SK-N-SH (cell line): ENCODE measurements at regions of chr17 and their contacts with region 1.

Region 1: DNA sequence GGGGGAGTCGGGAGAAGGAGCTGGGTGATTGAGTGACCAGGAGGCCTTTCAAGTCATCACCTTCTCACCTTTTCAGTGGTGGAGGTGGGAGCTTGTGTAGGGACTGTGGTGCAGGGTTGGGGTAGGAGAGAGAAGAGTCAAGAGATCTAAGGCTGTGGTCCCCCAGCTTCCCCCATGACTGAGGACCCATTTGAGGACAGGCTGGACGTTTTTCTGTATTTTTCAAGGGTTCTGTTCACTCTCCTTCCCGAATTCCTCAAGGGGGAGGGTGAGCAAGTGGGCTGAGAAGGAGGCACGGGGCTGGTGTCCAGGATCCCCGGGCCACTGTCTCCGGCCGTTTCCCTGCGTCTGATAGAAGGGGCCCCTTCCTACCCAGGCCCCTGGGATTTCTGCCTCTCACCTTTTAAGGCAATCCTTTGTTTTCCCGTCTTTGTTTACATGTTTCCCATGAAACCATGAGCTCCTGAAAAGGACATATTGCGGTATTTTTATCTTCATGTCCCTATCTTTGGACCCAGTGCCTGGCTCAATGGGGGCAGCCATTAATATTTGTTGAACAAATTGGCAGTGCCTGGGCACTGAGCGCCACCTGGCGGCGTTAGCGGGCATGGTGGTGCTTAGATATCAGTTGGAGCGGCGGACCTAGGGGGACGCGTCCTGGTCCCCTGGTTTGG is 9.2 kb upstream of the CD300A start:
- DNase-seq: peak; percentile 89
- H3K4me3 ChIP-seq: peak overlapping the region in 1 of 2 experiments; percentile 56; a peak in 1 of 4 replicates
- H3K27ac ChIP-seq: no peak overlapping the region
- H3K4me1 ChIP-seq: peaks cover 0 to 19% of the 10 kb centered on the region in 2 experiments; a peak in 2 of 4 replicates
- H3K27me3 ChIP-seq: no peaks in the 10 kb centered on the region
- CTCF ChIP-seq: peak; percentile 91
- EP300 ChIP-seq: no peak
- RAD21 ChIP-seq: peak; percentile 99

Region 2: DNA sequence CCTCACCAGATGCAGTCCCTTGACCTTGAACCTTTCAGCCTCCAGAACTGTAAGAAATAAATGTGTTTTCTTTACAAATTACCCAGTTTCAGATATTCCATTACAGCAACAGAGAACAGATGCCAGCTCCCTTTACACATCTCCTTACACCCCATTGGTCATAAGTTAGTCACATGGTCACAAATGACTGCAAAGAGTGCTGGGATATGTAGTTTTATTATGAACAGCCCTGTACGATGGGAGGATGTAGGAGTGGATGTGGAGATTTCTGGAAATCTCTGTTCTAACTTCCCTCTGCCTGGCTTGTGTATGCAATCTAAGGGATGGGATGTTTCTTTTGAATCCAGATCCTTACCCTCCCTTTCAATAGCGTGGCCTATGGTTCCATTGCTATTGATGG is 267.1 kb before region 1 on chr17:
- CTCF ChIA-PET with region 1: no interaction called
- POLR2A ChIA-PET with region 1: no interaction called
- DNase-seq: peak; percentile 90
- H3K4me3 ChIP-seq: no peak overlapping the region
- H3K27ac ChIP-seq: no peak overlapping the region
- H3K4me1 ChIP-seq: peaks cover 0 to 9% of the 10 kb centered on the region in 2 experiments; a peak in 1 of 4 replicates
- H3K27me3 ChIP-seq: peaks cover 12% of the 10 kb centered on the region
- CTCF ChIP-seq: no peak
- EP300 ChIP-seq: no peak
- RAD21 ChIP-seq: no peak

Region 3: DNA sequence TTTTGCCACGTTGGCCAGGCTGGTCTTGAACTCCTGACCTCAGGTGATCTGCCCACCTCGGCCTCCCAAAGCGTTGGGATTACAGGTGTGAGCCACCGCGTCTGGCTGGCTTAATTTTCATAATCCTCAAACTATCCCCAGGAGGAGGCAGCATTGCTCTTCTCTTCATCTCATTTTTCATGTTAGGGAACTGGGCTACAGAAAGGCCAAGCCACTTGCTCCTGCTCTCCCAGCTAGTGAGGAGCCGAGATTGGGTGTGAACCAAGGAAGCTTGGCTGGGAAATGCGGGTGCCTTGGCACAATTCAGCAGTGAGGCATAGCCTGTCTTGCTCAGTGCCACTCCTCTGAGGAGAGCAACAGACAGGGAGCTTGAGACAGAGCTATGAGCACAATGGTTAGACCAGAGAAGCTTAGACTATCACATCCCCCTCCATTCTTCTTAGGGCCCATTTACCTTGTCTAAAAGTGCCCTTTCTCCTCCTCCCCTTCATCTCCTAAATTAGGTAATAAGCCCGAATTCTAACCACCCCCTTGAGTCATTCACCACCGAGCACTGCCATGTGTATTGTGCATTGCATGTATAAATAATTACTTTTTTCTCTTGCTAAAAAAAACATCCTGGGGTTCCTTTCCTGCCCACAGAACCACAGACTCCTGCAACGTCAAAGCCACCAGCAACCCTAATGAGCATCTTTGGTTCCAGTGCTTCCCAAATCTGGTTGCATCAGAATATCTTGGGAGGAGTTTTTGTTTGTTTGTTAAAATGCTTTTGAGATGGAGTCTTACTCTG is 151.2 kb before region 1 on chr17:
- CTCF ChIA-PET with region 1: interaction called, 39 read pairs
- POLR2A ChIA-PET with region 1: no interaction called
- DNase-seq: no peak
- H3K4me3 ChIP-seq: no peak overlapping the region
- H3K27ac ChIP-seq: no peak overlapping the region
- H3K4me1 ChIP-seq: no peaks in the 10 kb centered on the region
- H3K27me3 ChIP-seq: no peaks in the 10 kb centered on the region
- CTCF ChIP-seq: no peak
- EP300 ChIP-seq: no peak
- RAD21 ChIP-seq: peak; percentile 28; the same call in 1 of the 2 replicates

Region 4: DNA sequence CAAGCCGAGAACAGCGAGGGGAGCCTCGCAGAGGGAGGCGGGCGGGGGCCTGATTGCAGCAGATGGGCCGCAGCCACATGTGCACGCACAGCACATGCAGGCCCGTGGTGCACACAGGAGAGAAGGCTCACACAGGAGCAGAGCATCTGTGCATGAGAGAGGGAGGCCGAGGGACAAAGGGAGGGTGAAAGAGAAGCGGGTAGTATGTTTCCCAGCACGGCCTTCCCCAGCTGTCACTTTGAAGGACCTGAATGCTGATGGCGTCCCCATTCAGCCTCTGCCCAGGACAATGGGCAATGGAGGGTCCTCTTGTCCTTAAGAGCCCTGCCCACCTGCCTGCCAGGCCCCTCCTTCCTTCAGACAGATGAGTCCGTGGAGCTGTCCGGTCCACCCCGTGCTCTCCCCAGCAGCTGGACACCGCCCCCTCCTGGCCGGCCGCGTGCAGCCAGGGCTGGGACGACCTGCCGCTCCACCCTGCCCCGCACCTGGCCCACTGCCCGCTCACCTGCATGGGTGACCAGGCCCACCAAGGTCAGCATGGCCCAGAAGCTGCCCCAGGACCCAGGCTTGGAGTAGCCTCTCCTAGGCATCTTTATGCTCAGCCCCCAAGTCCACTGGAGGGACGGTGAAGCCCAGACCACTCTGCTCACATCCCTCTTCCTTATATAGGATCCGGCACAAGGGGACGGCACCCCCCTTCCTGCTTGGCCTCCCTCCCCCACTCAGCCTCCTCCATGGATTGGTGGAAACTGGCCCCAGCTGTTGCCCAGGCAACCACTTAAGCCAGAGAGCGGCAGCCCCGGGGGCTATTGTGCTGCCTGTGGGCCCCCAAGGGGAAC is 95.8 kb before region 1 on chr17 and contains the start of gene BTBD17:
- CTCF ChIA-PET with region 1: interaction called, 48 read pairs
- POLR2A ChIA-PET with region 1: no interaction called
- DNase-seq: peak; percentile 78
- H3K4me3 ChIP-seq: peak within 1 kb of the TSS in 1 of 2 experiments; percentile 49; a peak in 1 of 4 replicates
- H3K27ac ChIP-seq: no peak within 1 kb of the TSS
- H3K4me1 ChIP-seq: no peaks in the 10 kb centered on the region; a peak in 1 of 4 replicates
- H3K27me3 ChIP-seq: no peaks in the 10 kb centered on the region
- CTCF ChIP-seq: no peak
- EP300 ChIP-seq: no peak
- RAD21 ChIP-seq: peak; percentile 40
- polyA plus RNA-seq, gene BTBD17: not detected in 2 replicates

Region 5: GRCh38 chr17:74372426-74372825 is 84.9 kb before region 1 on chr17:
- CTCF ChIA-PET with region 1: no interaction called
- POLR2A ChIA-PET with region 1: no interaction called
- DNase-seq: no peak
- H3K4me3 ChIP-seq: no peak overlapping the region
- H3K27ac ChIP-seq: no peak overlapping the region
- H3K4me1 ChIP-seq: peaks cover 0 to 5% of the 10 kb centered on the region in 2 experiments; a peak in 1 of 4 replicates
- H3K27me3 ChIP-seq: no peaks in the 10 kb centered on the region
- CTCF ChIP-seq: no peak
- EP300 ChIP-seq: no peak
- RAD21 ChIP-seq: no peak

Region 6: DNA sequence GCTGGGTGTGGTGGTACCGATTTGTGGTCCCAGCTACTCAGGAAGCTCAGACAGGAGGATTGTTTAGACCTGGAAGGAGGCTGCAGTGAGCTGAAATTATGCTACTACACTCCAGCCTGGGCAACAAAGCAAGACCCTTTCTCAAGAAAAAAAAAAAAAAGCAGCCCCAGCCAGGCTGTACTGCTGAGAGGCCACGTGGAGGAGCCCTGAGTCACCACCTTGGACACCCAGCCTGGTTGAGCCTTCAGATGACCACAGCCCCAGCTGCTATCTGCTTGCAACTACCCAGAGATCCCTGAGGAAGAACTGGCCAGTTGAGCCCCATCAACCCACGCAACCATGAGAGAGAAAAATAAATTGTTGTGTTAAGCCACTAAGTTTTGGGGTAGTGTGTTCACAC is 49.0 kb before region 1 on chr17:
- CTCF ChIA-PET with region 1: interaction called, 11 read pairs
- POLR2A ChIA-PET with region 1: no interaction called
- DNase-seq: no peak
- H3K4me3 ChIP-seq: no peak overlapping the region
- H3K27ac ChIP-seq: no peak overlapping the region
- H3K4me1 ChIP-seq: peaks cover 0 to 6% of the 10 kb centered on the region in 2 experiments; a peak in 1 of 4 replicates
- H3K27me3 ChIP-seq: no peaks in the 10 kb centered on the region
- CTCF ChIP-seq: no peak
- EP300 ChIP-seq: no peak
- RAD21 ChIP-seq: no peak

Region 7: GRCh38 chr17:74437702-74438101 is 19.6 kb before region 1 on chr17:
- CTCF ChIA-PET with region 1: interaction called, 55 read pairs
- POLR2A ChIA-PET with region 1: no interaction called
- DNase-seq: peak; percentile 68
- H3K4me3 ChIP-seq: no peak overlapping the region
- H3K27ac ChIP-seq: no peak overlapping the region
- H3K4me1 ChIP-seq: no peaks in the 10 kb centered on the region; a peak in 1 of 4 replicates
- H3K27me3 ChIP-seq: no peaks in the 10 kb centered on the region
- CTCF ChIP-seq: peak; percentile 67
- EP300 ChIP-seq: no peak
- RAD21 ChIP-seq: peak; percentile 55

Region 8: GRCh38 chr17:74485022-74485743 is 27.9 kb after region 1 on chr17:
- CTCF ChIA-PET with region 1: interaction called, 122 read pairs
- POLR2A ChIA-PET with region 1: no interaction called
- DNase-seq: no peak
- H3K4me3 ChIP-seq: no peak overlapping the region
- H3K27ac ChIP-seq: no peak overlapping the region
- H3K4me1 ChIP-seq: no peaks in the 10 kb centered on the region
- H3K27me3 ChIP-seq: no peaks in the 10 kb centered on the region
- CTCF ChIP-seq: no peak
- EP300 ChIP-seq: no peak
- RAD21 ChIP-seq: no peak

Region 9: GRCh38 chr17:74516561-74517328 is 59.5 kb after region 1 on chr17:
- CTCF ChIA-PET with region 1: no interaction called
- POLR2A ChIA-PET with region 1: no interaction called
- DNase-seq: no peak
- H3K4me3 ChIP-seq: no peak overlapping the region
- H3K27ac ChIP-seq: no peak overlapping the region
- H3K4me1 ChIP-seq: no peaks in the 10 kb centered on the region
- H3K27me3 ChIP-seq: no peaks in the 10 kb centered on the region
- CTCF ChIP-seq: no peak
- EP300 ChIP-seq: no peak
- RAD21 ChIP-seq: no peak

Region 10: GRCh38 chr17:74585711-74586110 is 128.4 kb after region 1 on chr17:
- CTCF ChIA-PET with region 1: no interaction called
- POLR2A ChIA-PET with region 1: no interaction called
- DNase-seq: no peak
- H3K4me3 ChIP-seq: no peak overlapping the region
- H3K27ac ChIP-seq: no peak overlapping the region
- H3K4me1 ChIP-seq: no peaks in the 10 kb centered on the region
- H3K27me3 ChIP-seq: no peaks in the 10 kb centered on the region
- CTCF ChIP-seq: no peak
- EP300 ChIP-seq: no peak
- RAD21 ChIP-seq: no peak